Activated CD4-positive, alpha-beta T cell treated with anti-CD3 and anti-CD28 coated beads, Interleukin-2, amount 10 ng/mL, durations not matched to agents 24 days and 14 days (primary cell): ENCODE measurements at regions of chr3 and their contacts with region 1.

Region 1: DNA sequence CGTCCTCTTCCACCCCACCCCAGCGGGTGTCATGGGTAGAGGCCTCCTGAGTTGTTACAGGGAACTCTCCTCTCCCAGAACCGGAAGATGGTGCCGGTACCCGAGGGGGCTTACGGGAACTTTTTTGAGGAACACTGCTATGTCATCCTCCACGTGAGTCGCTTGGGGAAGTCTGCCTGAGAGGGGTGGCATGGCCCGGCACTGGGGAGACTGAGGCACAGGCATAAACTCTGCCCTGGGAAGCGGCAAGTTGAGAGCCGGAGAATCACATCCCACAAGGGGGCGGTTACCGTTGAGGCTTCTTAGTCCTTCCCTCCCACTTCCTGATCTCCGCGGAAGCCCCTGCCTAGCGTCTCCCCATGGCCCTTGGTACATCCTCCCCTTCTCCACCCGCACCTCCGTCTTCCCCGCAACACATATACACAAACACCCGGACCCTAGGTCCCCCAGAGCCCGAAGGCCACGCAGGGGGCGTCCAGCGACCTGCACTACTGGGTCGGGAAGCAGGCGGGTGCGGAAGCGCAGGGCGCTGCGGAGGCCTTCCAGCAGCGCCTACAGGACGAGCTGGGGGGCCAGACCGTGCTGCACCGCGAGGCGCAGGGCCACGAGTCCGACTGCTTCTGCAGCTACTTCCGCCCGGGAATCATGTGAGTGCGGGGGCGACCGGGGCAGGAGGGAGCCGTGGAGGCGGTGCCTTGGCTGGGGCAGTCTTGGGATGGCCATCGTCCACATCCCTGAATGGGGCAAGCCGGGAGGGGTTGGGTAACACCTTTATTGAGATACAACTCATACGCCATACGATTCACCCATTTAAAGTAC is 3.4 kb downstream of the VILL start:
- DNase-seq: peak; percentile 89
- H3K4me3 Mint-ChIP-seq: peak overlapping the region; percentile 97
- H3K27ac Mint-ChIP-seq: peak overlapping the region; percentile 95
- H3K4me1 Mint-ChIP-seq: peaks cover 46% of the 10 kb centered on the region
- H3K27me3 Mint-ChIP-seq: peaks cover 2% of the 10 kb centered on the region

Region 2: DNA sequence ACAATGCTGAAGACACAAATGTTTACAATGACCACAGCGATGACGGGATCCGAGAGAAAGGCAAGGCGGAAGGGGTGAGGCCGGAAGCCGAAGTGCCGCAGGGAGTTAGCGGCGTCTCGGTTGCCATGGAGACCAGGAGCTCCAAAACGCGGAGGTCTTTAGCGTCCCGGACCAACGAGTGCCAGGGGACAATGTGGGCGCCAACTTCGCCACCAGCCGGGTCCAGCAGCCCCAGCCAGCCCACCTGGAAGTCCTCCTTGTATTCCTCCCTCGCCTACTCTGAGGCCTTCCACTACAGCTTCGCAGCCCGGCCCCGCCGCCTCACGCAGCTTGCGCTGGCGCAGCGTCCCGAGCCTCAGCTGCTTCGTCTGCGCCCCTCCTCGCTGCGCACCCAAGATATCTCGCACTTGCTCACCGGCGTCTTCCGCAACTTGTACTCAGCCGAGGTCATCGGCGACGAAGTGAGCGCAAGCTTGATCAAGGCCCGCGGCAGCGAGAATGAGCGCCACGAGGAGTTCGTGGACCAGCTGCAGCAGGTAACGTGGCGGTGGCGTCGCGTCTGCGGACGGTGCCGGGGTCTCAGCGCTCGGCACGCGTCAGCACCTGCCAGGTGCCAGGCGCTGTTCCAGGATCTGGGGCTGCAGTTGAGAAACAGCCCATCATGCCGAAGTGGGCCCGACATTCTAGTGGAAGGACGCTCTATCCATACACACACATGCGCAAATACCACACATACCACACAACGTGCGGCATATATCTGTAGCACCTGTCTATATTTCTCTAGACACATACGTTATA is 45.3 kb after region 1 on chr3 and contains the start of gene DLEC1:
- intact Hi-C with region 1: loop called (anchors 2 kb)
- DNase-seq: peak; percentile 96
- H3K4me3 Mint-ChIP-seq: peak within 1 kb of the TSS; percentile 59
- H3K27ac Mint-ChIP-seq: peak within 1 kb of the TSS; percentile 89
- H3K4me1 Mint-ChIP-seq: peaks cover 28% of the 10 kb centered on the region
- H3K27me3 Mint-ChIP-seq: peaks cover 2% of the 10 kb centered on the region
- total RNA-seq, gene DLEC1: 0.17 and 0.54 TPM in 2 replicates